Calu3 (cell line): ENCODE measurements at regions of chr13 and their contacts with region 1.

Region 1: DNA sequence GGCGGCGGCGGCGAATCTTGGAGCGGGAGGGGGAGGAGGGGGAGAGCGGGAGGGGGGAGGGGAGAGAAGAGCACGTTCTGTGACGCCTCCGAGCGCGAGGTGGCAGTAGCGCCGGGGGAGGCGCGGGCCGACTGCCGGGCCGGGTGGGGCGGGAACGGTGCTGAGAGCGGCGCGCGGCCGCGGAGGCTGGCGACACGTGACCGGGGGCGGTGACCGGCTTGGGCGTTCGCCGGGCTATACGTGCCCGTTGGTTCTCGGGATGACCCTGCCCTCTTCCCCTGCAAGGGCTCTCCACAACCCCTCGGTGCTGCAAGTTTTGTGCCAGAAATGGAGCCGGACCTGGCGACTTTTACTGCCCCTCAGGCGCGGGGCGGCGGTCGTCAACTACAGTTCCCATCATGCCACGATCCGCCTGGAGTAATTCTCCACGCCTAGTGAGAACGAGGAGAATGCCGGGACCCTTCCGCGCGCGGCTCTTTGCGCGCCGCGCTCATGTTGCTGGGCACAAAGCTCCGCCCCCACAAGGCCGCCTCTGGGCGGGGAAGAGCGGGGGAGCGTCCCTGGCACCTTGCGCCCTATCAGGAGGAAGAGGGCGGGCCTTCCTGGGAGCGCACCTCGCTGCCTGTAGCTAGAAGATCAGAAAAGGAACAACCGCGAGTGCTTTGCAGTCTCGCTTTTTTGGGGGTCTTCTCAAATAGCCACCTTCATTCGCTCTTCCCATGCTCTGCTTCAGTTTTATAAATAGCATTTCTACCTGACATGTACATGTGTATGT is at the start of gene KPNA3:
- DNase-seq: peak; percentile 89
- H3K4me3 Mint-ChIP-seq: peak within 1 kb of the TSS; percentile 79
- H3K27ac Mint-ChIP-seq: peak within 1 kb of the TSS; percentile 65
- H3K4me1 Mint-ChIP-seq: peaks cover 18% of the 10 kb centered on the region
- H3K27me3 Mint-ChIP-seq: no peaks in the 10 kb centered on the region
- CTCF ChIP-seq: no peak
- total RNA-seq, gene KPNA3: 19.3 and 23.1 TPM in 2 replicates

Region 2: GRCh38 chr13:49690992-49691886 is 101.5 kb before region 1 on chr13 and contains the start of gene EBPL:
- CTCF ChIA-PET with region 1: interaction called, 3 read pairs
- intact Hi-C with region 1: loop called (anchors 2 kb)
- DNase-seq: peak; percentile 91
- H3K4me3 Mint-ChIP-seq: peak within 1 kb of the TSS; percentile 79
- H3K27ac Mint-ChIP-seq: peak within 1 kb of the TSS; percentile 39
- H3K4me1 Mint-ChIP-seq: no peaks in the 10 kb centered on the region
- H3K27me3 Mint-ChIP-seq: no peaks in the 10 kb centered on the region
- CTCF ChIP-seq: no peak
- total RNA-seq, gene EBPL: 40.5 and 43.9 TPM in 2 replicates

Region 3: DNA sequence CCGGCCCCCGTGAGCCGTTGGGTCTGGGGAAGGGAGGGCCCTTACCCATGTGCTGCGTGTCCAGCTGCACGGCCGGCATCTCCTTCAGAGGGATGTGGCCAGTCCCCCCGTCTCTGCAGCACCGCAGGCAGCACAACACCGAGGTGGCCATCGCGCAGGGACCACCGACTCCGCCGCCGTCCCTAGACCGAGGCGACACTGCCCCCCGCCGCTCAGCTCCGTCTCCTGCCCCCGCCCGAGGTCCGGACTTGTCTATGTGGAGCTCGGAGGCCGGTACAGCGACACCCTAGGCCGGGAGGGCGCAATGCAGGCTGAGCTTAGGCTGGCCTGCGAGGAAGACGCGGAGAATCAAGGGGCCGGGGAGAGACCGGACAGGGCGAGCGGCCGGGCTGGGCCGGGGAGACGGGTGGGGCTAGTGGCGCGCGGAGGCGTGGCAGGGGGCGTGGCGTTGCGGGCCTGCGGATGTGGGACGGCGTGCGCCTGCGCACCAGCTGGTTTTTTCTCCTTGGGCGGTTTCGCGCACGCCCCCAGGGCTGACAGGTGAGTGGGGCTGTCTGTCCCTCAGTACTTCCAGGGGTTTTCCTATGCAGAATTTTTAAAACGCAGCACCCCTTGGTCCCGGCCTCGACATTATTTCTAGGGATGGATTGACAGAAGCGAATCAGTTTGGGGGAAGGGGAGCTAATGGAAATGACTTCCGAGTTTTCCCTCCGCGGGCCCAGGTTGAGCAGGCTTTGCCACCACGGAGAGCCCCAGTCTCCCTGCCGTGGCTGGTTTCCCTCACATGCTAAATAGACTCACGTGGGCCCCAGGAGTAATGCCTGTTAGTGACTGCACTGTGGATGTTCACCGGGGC is 143.6 kb after region 1 on chr13 and contains the start of gene SPRYD7:
- CTCF ChIA-PET with region 1: interaction called, 12 read pairs
- intact Hi-C with region 1: no loop called
- DNase-seq: peak; percentile 97
- H3K4me3 Mint-ChIP-seq: peak within 1 kb of the TSS; percentile 82
- H3K27ac Mint-ChIP-seq: peak within 1 kb of the TSS; percentile 87
- H3K4me1 Mint-ChIP-seq: peaks cover 14% of the 10 kb centered on the region
- H3K27me3 Mint-ChIP-seq: no peaks in the 10 kb centered on the region
- CTCF ChIP-seq: peak; percentile 79
- total RNA-seq, gene SPRYD7: 5.3 and 5.6 TPM in 2 replicates